Endothelial cell of umbilical vein (primary cell): ENCODE measurements at regions of chr3 and their contacts with region 1.

Region 1: GRCh38 chr3:183447206-183448001 is 19.0 kb upstream of the MCF2L2 start:
- DNase-seq: peak; percentile 91
- H3K4me3 ChIP-seq: peak overlapping the region; percentile 35 to 81 (median 78)
- H3K27ac ChIP-seq: peak overlapping the region; percentile 1
- H3K4me1 ChIP-seq: peaks cover 17% of the 10 kb centered on the region
- H3K27me3 ChIP-seq: no peaks in the 10 kb centered on the region
- CTCF ChIP-seq: peak in 1 of 2 donors; percentile 0
- POLR2A ChIP-seq: peak; percentile 87

Region 2: GRCh38 chr3:183427876-183428446 is 19.4 kb before region 1 on chr3:
- CTCF ChIA-PET with region 1: no interaction called
- POLR2A ChIA-PET with region 1: no interaction called
- dilution Hi-C with region 1: no loop called
- intact Hi-C with region 1: loop called (anchors 1 kb)
- DNase-seq: peak; percentile 36
- H3K4me3 ChIP-seq: peak overlapping the region; percentile 43 to 55 (median 51)
- H3K27ac ChIP-seq: no peak overlapping the region
- H3K4me1 ChIP-seq: peaks cover 9% of the 10 kb centered on the region
- H3K27me3 ChIP-seq: peaks cover 24 to 34% of the 10 kb centered on the region in 2 experiments
- CTCF ChIP-seq: no peak
- POLR2A ChIP-seq: no peak

Region 3: DNA sequence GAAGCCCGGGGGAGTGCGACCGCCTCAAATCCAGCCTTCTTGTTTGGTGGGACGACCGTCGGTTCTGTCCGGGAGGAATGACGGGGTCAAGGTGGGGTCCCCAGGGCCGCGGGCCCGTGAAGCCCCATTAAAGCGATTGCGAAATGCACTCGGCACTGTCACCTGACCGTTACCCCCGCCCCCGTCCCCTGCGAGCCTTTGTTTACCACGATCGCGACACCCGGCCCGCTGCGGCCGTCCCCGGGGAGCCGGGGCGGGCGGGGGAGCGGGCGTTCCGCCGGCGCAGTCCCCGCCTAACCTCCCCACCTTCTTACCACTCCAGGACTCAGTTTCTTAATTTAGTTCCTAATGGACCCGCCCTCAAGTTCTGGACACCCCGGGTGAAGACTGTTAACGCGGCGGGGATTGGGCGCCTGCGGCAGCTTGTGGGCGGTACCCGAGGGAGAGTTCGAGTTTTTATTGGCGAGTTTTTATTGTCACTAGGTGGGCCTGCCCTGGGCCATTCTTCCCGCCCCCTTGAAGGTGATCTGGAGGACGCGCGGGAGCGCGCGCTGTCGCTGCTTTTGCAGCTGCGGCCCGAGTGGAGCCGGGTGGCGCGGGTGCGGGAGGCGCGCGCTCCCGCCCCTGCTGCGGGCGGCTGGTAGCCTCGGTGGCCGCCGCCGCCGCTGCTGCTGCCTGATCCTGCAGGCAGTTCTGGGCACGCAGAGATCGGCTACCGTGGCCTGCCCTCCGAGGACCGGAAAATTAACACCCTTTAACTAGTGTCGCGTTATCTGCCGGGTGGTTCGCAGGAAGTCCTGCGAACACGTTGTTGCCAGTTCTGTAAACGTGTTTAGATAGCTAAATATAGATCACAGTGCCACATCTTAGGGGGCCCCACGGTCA is 189.1 kb after region 1 on chr3:
- CTCF ChIA-PET with region 1: no interaction called
- POLR2A ChIA-PET with region 1: no interaction called
- dilution Hi-C with region 1: no loop called
- intact Hi-C with region 1: no loop called
- DNase-seq: peak; percentile 97
- H3K4me3 ChIP-seq: peak overlapping the region; percentile 81 to 99 (median 84)
- H3K27ac ChIP-seq: peak overlapping the region; percentile 89
- H3K4me1 ChIP-seq: peaks cover 19% of the 10 kb centered on the region
- H3K27me3 ChIP-seq: no peaks in the 10 kb centered on the region
- CTCF ChIP-seq: no peak
- POLR2A ChIP-seq: no peak